Colonic mucosa (tissue), 4 donors: ENCODE measurements at regions of chr3 and their contacts with region 1.

Region 1: DNA sequence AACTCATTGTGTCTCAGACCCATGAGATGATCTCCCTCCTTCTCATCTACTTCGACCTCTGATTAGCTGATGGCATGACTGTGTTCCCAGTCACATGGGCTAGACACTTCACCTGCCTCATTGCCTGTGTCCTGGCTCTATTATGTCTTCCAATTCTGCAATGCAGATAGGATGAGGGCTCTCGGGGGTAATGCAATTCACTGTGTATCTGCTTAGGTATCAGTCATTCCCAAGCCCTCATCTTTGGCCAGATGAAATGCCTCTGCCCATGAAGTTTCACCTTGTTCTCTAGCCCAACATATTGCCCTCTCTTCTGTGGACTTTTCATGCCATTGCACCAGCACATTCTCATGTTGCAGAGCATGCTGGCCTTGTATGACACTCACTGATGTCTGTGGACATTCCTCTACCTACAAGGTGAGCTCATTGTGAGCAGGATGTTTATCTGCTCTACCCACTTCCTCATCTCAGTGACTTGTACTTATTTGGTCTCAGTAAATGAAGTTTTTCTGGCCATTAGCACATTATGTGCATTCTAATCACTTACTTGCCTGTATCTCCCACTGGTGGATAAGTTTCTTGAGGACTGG is 32.3 kb downstream of the MOBP start:
- DNase-seq: no peak
- H3K4me3 ChIP-seq: no peak overlapping the region
- H3K27ac ChIP-seq: no peak overlapping the region
- H3K4me1 ChIP-seq: no peaks in the 10 kb centered on the region
- H3K27me3 ChIP-seq: no peaks in the 10 kb centered on the region
- CTCF ChIP-seq: no peak

Region 2: GRCh38 chr3:39447637-39448483 is 51.9 kb before region 1 on chr3:
- intact Hi-C with region 1: loop called (anchors 2 kb)
- DNase-seq: peak; percentile 90
- H3K4me3 ChIP-seq: no peak overlapping the region
- H3K27ac ChIP-seq: peak overlapping the region; percentile 77
- H3K4me1 ChIP-seq: no peaks in the 10 kb centered on the region
- H3K27me3 ChIP-seq: no peaks in the 10 kb centered on the region
- CTCF ChIP-seq: peak; percentile 76

Region 3: DNA sequence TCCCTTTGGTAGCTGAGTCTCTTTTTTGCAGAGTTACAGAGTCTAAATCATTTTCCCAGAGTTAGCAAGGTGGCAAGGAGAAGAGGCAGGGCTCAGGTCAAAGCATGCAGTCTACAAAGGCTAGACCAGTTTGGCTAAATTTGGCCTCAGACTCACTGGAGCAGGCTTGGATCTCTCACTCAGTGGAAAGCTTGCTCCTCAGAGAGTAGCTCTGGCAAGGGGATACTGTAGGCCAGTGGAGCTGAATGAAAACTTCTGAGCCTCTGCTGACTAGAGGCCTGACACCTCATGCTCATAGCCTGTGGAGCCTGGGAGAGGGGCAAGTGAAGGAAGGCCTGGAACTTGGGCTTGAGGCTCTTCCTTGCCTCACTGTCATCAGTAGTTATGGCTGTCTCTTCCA is 68.8 kb after region 1 on chr3:
- intact Hi-C with region 1: no loop called
- DNase-seq: no peak
- H3K4me3 ChIP-seq: no peak overlapping the region
- H3K27ac ChIP-seq: no peak overlapping the region
- H3K4me1 ChIP-seq: no peaks in the 10 kb centered on the region
- H3K27me3 ChIP-seq: no peaks in the 10 kb centered on the region
- CTCF ChIP-seq: no peak